ENCODE measurements at regions of chr2 and their contacts with region 1.

Region 1: DNA sequence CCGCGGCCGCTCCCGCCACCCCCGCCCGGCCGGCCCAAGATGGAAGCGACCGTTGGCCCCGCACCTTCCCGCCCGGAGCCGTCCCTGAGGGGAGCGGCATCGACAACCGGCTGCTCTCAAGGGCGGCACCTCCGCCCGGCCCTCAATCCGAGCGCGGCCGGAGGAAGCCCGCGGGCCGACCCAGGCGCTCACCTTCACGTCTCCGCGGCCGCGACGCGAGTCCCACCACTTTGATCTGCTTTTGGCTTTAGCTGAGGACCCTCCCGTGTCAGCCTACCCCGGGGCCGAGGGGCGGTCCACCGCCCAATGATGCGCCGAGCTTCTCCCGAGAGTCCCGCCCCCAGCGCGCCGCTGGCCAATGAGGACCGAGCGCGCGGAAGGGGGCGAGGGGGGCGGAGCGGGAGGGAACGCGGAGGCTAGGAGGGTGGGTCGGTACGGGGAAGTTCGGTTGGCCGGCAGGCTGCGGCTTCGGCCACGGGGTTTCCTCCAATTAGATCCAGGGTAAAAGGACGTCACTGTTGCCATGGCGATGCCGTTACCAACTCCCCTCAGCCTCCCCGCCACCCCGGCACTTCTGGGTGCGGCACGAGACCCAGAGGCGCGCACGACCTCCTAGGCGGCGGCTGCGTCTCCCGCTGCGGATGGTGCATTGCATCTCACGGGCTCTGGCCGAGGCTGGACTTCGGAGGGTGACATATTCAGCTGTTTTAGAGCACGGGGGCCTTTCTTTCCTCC is at the start of gene YWHAQ:
- DNase-seq: peak; percentile 99
- H3K4me3 ChIP-seq: peak within 1 kb of the TSS; percentile 61 to 76
- H3K27ac ChIP-seq: peak within 1 kb of the TSS; percentile 86 to 94
- H3K4me1 ChIP-seq: peaks cover 6% of the 10 kb centered on the region
- H3K27me3 ChIP-seq: no peaks in the 10 kb centered on the region
- CTCF ChIP-seq: no peak
- POLR2A ChIP-seq: peak; percentile 96
- total RNA-seq, gene YWHAQ: 208 to 248 TPM

Region 2: DNA sequence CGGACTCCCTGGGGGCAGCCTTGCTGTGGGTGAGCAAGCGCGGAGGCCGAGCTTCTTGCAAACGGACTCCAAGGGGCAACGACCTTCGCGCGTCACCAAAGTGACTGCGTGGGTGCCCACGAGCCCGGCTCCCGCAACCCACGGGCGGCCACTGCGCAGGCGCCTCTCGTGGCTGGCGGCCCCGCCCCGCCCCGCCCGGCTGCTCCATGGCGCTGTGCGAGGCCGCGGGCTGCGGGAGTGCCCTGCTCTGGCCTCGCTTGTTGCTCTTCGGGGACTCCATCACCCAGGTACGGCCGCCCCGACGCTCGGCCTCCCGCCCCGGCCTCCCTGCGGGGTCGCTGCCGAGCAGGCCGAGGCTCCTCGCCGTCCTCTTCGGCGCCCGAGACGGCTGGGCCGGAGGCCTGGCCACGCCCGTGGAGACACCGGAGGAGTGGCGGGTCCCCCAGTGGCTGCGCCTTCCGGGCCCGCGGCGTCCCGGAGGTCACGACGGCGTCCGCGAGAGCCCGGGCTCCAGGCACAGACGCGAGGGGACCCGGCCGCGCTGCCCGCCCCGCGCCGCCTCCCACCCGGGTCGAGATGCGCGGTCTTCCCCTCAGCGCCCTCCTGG is 156.5 kb before region 1 on chr2 and contains the start of gene IAH1:
- intact Hi-C with region 1: loop called (anchors 5 kb)
- DNase-seq: peak; percentile 39
- H3K4me3 ChIP-seq: peak within 1 kb of the TSS; percentile 78 to 82
- H3K27ac ChIP-seq: peak within 1 kb of the TSS; percentile 81 to 83
- H3K4me1 ChIP-seq: no peaks in the 10 kb centered on the region
- H3K27me3 ChIP-seq: no peaks in the 10 kb centered on the region
- CTCF ChIP-seq: peak in 2 of 4 experiments; percentile 12 to 15
- POLR2A ChIP-seq: peak; percentile 63
- total RNA-seq, gene IAH1: 48.1 to 61.3 TPM

Measured in prostate gland (tissue), 2 donors.